Calu3 (cell line): ENCODE measurements at regions of chr2 and their contacts with region 1.

Region 1: DNA sequence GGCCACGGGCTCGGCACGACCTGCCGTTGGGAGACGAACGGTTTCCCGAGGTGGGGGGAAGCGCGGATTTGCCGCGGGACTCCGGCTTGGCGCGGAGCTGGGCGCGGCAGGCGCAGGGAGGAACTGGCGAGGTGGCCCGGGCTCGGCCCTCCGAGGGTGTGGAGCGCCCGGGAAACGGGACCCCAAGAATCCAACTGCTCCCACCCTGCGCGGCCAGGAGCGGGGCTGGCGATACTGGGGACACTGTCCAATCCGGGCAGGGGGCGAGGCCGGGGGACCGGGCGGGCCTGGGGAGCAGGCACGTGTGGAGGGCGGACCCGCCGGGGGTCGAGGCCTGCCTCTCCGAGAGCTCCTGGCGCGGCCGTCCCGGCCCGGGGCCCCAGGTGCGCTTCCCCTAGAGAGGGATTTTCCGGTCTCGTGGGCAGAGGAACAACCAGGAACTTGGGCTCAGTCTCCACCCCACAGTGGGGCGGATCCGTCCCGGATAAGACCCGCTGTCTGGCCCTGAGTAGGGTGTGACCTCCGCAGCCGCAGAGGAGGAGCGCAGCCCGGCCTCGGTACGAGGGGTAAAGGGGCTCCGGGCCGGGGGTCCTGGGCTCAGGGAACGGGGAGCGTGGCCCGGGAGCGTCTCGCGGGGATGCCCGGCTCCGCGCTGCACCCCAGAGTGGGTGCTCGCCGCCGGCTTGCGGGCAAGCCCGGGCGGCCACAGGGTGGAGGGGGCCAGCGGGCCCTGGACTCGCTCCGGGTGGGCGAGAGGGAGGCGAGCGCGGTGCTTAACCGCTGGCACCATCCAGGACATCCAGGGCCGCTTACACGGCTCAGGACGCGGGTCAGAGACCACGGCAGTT is at the start of gene ANXA4:
- DNase-seq: peak; percentile 93
- H3K4me3 Mint-ChIP-seq: peak within 1 kb of the TSS; percentile 92
- H3K27ac Mint-ChIP-seq: peak within 1 kb of the TSS; percentile 97
- H3K4me1 Mint-ChIP-seq: peaks cover 30% of the 10 kb centered on the region
- H3K27me3 Mint-ChIP-seq: no peaks in the 10 kb centered on the region
- CTCF ChIP-seq: no peak
- total RNA-seq, gene ANXA4: 1,439 and 1,638 TPM in 2 replicates

Region 2: DNA sequence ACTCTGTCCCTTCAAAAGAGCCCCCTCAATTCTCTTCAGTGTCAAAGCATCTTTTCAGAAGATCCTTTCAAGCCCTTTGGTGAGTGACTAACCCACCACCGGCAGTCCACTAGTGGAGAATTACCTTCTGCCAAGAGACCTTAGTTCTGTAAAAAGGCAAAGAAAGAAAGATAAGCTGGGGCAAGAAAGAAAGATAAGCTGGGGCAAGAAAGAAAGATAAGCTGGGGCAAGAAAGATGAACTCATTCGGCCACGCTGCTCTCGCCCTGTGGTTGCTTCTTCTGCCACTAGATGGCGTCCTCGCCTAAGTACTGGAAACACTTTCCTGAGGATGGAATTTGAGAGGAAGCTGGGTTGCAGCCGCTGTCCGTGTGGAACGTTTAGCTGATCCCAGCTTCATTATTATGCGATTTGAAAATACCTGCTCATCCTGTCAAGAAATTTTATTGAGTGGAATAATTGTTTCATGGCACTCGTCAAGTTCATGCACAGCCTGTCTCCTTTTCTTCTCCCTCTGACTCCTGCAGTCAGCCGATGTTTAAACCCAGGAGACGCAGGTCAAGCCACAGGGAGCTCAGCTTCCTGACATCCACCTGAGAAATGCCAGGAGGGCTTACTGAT is 17.2 kb before region 1 on chr2:
- CTCF ChIA-PET with region 1: interaction called, 18 read pairs
- intact Hi-C with region 1: no loop called
- DNase-seq: peak; percentile 89
- H3K4me3 Mint-ChIP-seq: no peak overlapping the region
- H3K27ac Mint-ChIP-seq: no peak overlapping the region
- H3K4me1 Mint-ChIP-seq: peaks cover 23% of the 10 kb centered on the region
- H3K27me3 Mint-ChIP-seq: no peaks in the 10 kb centered on the region
- CTCF ChIP-seq: peak; percentile 89

Region 3: DNA sequence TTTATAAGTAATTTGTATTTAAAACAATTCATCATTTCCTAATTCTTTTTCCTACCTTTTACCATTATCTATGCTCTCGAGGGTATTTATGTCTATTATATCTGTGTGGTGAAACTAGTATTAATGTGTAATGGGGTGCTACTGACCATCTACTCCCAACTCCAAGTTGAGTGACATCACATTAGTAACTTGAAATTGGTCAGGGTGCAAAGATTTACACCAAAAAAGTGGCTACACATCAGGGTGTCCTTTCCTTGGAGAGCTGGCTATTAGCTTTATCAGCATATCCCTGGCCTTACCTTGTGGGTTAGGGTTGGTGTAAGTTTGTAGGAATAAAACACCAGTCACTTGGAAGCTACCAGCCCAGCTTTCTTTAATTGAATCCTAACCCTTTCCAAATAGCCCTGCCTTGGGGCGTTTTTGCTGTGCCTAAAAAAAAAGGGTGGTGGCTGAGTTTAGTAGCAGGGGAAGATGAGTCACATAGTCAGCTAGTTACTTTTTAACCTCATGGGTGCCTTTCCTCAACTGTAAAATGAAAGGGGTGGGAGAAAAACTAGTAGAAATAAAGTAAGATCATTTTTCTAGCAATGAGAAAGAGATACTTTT is 14.1 kb after region 1 on chr2:
- CTCF ChIA-PET with region 1: interaction called, 6 read pairs
- intact Hi-C with region 1: loop called (anchors 2 kb)
- DNase-seq: peak; percentile 81
- H3K4me3 Mint-ChIP-seq: peak overlapping the region; percentile 29
- H3K27ac Mint-ChIP-seq: peak overlapping the region; percentile 32
- H3K4me1 Mint-ChIP-seq: peaks cover 59% of the 10 kb centered on the region
- H3K27me3 Mint-ChIP-seq: no peaks in the 10 kb centered on the region
- CTCF ChIP-seq: no peak

Region 4: GRCh38 chr2:69781321-69782248 is 39.7 kb after region 1 on chr2:
- CTCF ChIA-PET with region 1: interaction called, 5 read pairs
- intact Hi-C with region 1: loop called (anchors 5 kb)
- DNase-seq: peak; percentile 73
- H3K4me3 Mint-ChIP-seq: peak overlapping the region; percentile 15
- H3K27ac Mint-ChIP-seq: peak overlapping the region; percentile 86
- H3K4me1 Mint-ChIP-seq: peaks cover 71% of the 10 kb centered on the region
- H3K27me3 Mint-ChIP-seq: no peaks in the 10 kb centered on the region
- CTCF ChIP-seq: no peak

Region 5: GRCh38 chr2:69816923-69817542 is 75.2 kb after region 1 on chr2:
- CTCF ChIA-PET with region 1: interaction called, 4 read pairs
- intact Hi-C with region 1: loop called (anchors 5 kb)
- DNase-seq: peak; percentile 74
- H3K4me3 Mint-ChIP-seq: no peak overlapping the region
- H3K27ac Mint-ChIP-seq: peak overlapping the region; percentile 31
- H3K4me1 Mint-ChIP-seq: peaks cover 22% of the 10 kb centered on the region
- H3K27me3 Mint-ChIP-seq: no peaks in the 10 kb centered on the region
- CTCF ChIP-seq: peak; percentile 74

Region 6: GRCh38 chr2:69829256-69830046 is 87.6 kb after region 1 on chr2 and contains the start of gene GMCL1:
- CTCF ChIA-PET with region 1: interaction called, 3 read pairs
- intact Hi-C with region 1: loop called (anchors 5 kb)
- DNase-seq: peak; percentile 98
- H3K4me3 Mint-ChIP-seq: peak within 1 kb of the TSS; percentile 98
- H3K27ac Mint-ChIP-seq: peak within 1 kb of the TSS; percentile 94
- H3K4me1 Mint-ChIP-seq: peaks cover 34% of the 10 kb centered on the region
- H3K27me3 Mint-ChIP-seq: no peaks in the 10 kb centered on the region
- CTCF ChIP-seq: no peak
- total RNA-seq, gene GMCL1: 63.8 and 76.4 TPM in 2 replicates